ENCODE measurements at regions of chr14 and their contacts with region 1.

Region 1: GRCh38 chr14:101518610-101519473 is 42.5 kb upstream of the DIO3 start:
- DNase-seq: no peak
- H3K4me3 ChIP-seq: no peak overlapping the region
- H3K27ac ChIP-seq: peak overlapping the region in 10 of 59 donors; percentile 5 to 62 (median 46)
- H3K27me3 ChIP-seq: no peaks in the 10 kb centered on the region
- CTCF ChIP-seq: no peak

Region 2: DNA sequence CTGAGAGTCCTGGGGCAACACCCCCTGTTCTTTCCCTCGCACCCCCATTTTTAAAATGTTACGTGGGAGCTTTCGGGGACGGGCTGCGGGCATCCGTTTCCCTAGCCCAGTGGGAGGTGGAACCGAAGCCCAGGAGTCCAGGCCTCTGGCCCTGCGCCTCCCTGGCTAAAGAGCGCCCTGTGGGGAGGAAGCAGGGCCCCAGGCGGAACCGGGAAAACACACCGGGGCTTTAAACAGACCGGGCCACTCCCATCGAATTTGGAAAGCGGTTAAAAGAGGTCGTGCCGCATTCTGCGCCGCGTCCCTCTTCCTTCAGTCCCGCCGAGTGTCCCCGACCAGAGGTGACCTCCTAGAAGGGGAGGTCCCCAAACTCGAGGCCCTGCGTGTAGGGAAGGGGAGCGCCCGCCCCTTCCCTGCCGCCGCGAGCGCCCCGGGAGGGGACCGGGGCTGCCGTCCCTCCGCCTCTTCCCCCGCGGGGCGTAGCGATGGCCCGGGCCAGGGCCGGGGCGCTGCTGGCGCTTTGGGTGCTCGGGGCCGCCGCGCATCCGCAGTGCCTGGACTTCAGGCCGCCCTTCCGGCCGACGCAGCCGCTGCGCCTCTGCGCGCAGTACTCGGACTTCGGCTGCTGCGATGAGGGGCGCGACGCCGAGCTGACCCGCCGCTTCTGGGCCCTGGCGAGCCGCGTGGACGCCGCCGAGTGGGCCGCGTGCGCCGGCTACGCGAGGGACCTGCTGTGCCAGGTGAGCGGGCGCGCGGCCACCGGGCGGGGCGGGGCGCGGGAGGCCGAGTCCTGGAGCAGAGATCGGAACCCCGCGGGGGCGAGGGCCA is 1873.9 kb before region 1 on chr14 and contains the start of gene HHIPL1:
- intact Hi-C with region 1: loop called in 1 of 2 experiments (anchors 10 kb)
- DNase-seq: no peak
- H3K4me3 ChIP-seq: peak within 1 kb of the TSS; percentile 33 to 74 (median 60)
- H3K27ac ChIP-seq: peak within 1 kb of the TSS in 10 of 59 donors; percentile 1 to 62 (median 44)
- H3K27me3 ChIP-seq: peaks cover 0 to 7% (median 0%) of the 10 kb centered on the region in 45 donors
- CTCF ChIP-seq: no peak
- total RNA-seq, gene HHIPL1: 8.6 to 35.8 (median 18.2) TPM

Region 3: GRCh38 chr14:101575582-101575981 is 56.7 kb after region 1 on chr14:
- intact Hi-C with region 1: no loop called
- DNase-seq: no peak
- H3K4me3 ChIP-seq: no peak overlapping the region
- H3K27ac ChIP-seq: no peak overlapping the region
- H3K27me3 ChIP-seq: peaks cover 0 to 17% (median 0%) of the 10 kb centered on the region in 45 donors
- CTCF ChIP-seq: no peak

Region 4: DNA sequence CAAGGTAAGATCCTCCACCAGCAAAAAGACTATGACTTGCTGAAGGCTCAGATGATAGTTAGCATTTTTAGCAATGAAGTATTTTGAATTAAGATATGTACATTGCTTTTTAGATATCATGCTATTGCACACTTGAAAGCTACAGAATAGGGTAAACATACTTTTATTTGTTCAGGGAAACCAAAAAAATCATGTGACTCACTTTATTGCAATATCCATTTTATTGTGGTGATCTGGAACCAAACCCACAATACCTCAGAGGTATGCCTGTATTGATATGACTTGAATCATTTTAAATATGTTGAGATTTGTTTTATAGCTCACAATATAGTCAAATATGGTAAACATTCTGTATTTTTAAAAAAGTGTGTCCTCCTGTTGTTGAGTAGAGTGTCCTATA is 138.5 kb after region 1 on chr14:
- intact Hi-C with region 1: no loop called
- DNase-seq: no peak
- H3K4me3 ChIP-seq: no peak overlapping the region
- H3K27ac ChIP-seq: no peak overlapping the region
- H3K27me3 ChIP-seq: peaks cover 0 to 6% (median 0%) of the 10 kb centered on the region in 45 donors
- CTCF ChIP-seq: no peak

Measured in dorsolateral prefrontal cortex (tissue), 120 donors.